Endothelial cell of umbilical vein (primary cell): ENCODE measurements at regions of chr9 and their contacts with region 1.

Region 1: DNA sequence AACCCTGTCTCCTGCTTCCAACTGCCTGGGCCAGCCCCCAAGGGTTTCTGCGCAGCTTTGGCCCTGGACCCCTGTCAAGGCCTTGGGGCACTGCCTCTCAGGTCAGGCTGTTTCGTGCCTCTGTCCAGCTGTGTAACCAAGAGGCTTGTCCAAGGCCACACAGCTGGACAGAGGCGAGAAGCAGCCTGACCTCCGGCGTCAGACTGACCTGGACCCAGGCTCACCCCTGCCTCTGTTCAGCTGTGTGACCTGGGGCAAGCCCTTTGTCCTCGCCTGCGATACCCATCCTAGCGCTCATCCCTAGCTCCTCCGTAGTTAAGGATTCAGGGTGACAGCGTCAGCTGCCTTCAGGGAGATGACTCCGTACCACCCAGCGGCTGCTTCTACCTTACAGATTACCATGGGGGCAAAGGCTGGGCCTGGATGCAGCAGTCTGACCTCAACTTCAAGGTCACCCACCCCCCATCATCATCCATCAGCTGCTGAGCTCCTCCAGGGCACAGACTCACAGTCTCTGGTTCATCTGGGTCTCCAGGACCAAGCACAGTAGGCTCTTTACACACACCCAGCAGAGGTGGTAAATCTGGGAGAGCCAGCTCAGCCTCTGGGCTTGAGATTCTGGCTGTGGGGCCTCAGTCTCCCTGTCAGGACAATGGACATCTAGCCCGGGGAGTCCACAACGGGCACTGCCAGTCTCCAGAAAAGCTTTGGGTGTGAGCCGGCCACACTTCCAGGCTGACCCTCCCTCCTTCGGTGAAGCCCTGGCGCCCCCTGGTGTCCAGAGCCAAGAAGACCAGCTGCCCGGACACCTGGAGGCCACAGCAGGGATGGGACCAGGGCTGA is 7.9 kb downstream of the AK1 start:
- DNase-seq: peak; percentile 78
- H3K4me3 ChIP-seq: no peak overlapping the region
- H3K27ac ChIP-seq: no peak overlapping the region
- H3K4me1 ChIP-seq: peaks cover 17% of the 10 kb centered on the region
- H3K27me3 ChIP-seq: no peaks in the 10 kb centered on the region
- CTCF ChIP-seq: peak; percentile 91 to 95
- POLR2A ChIP-seq: no peak

Region 2: GRCh38 chr9:127742435-127743088 is 127.0 kb before region 1 on chr9:
- CTCF ChIA-PET with region 1: interaction called, 8 read pairs
- POLR2A ChIA-PET with region 1: interaction called, 3 read pairs
- dilution Hi-C with region 1: no loop called
- intact Hi-C with region 1: loop called (anchors 1 kb)
- DNase-seq: no peak
- H3K4me3 ChIP-seq: no peak overlapping the region
- H3K27ac ChIP-seq: no peak overlapping the region
- H3K4me1 ChIP-seq: no peaks in the 10 kb centered on the region
- H3K27me3 ChIP-seq: no peaks in the 10 kb centered on the region
- CTCF ChIP-seq: no peak
- POLR2A ChIP-seq: no peak

Region 3: GRCh38 chr9:127796225-127796813 is 73.2 kb before region 1 on chr9:
- CTCF ChIA-PET with region 1: interaction called, 25 read pairs
- POLR2A ChIA-PET with region 1: interaction called, 4 read pairs
- dilution Hi-C with region 1: no loop called
- intact Hi-C with region 1: no loop called
- DNase-seq: no peak
- H3K4me3 ChIP-seq: no peak overlapping the region
- H3K27ac ChIP-seq: no peak overlapping the region
- H3K4me1 ChIP-seq: peaks cover 14% of the 10 kb centered on the region
- H3K27me3 ChIP-seq: no peaks in the 10 kb centered on the region
- CTCF ChIP-seq: no peak
- POLR2A ChIP-seq: peak; percentile 21

Region 4: DNA sequence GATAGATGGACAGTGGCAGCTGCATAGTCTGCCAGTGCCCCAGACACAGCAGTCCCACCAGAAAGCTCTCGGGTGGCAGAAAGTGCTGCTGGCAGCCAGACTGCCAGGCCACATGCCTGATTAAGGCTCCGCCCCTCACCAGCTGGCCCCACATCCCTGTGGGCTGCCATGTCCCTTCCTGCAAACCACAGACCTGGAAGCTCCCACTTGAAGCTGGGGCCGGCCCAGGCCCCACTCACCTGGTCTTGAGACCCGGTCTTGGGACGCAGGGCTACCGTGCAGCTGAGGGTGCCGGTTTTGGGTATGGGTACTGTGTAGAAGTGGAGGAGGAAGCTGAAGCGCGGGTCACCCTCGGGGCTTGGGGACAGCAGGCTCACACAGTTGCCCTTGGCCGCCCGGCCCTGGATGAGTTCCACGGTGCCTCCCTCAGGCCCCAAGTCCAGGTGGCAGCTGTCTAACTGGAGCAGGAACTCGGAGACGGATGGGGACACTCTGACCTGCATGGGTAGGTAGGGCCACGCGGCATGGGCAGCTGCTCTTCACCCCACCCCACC is 51.6 kb before region 1 on chr9:
- CTCF ChIA-PET with region 1: interaction called, 76 read pairs
- POLR2A ChIA-PET with region 1: no interaction called
- dilution Hi-C with region 1: no loop called
- intact Hi-C with region 1: loop called (anchors 2 kb)
- DNase-seq: no peak
- H3K4me3 ChIP-seq: no peak overlapping the region
- H3K27ac ChIP-seq: no peak overlapping the region
- H3K4me1 ChIP-seq: peaks cover 10% of the 10 kb centered on the region
- H3K27me3 ChIP-seq: no peaks in the 10 kb centered on the region
- CTCF ChIP-seq: no peak
- POLR2A ChIP-seq: no peak

Region 5: GRCh38 chr9:127838375-127839078 is 31.0 kb before region 1 on chr9:
- CTCF ChIA-PET with region 1: interaction called, 37 read pairs
- POLR2A ChIA-PET with region 1: interaction called, 5 read pairs
- dilution Hi-C with region 1: no loop called
- intact Hi-C with region 1: no loop called
- DNase-seq: peak; percentile 97
- H3K4me3 ChIP-seq: no peak overlapping the region
- H3K27ac ChIP-seq: peak overlapping the region; percentile 99
- H3K4me1 ChIP-seq: peaks cover 74% of the 10 kb centered on the region
- H3K27me3 ChIP-seq: no peaks in the 10 kb centered on the region
- CTCF ChIP-seq: no peak
- POLR2A ChIP-seq: peak; percentile 76

Region 6: DNA sequence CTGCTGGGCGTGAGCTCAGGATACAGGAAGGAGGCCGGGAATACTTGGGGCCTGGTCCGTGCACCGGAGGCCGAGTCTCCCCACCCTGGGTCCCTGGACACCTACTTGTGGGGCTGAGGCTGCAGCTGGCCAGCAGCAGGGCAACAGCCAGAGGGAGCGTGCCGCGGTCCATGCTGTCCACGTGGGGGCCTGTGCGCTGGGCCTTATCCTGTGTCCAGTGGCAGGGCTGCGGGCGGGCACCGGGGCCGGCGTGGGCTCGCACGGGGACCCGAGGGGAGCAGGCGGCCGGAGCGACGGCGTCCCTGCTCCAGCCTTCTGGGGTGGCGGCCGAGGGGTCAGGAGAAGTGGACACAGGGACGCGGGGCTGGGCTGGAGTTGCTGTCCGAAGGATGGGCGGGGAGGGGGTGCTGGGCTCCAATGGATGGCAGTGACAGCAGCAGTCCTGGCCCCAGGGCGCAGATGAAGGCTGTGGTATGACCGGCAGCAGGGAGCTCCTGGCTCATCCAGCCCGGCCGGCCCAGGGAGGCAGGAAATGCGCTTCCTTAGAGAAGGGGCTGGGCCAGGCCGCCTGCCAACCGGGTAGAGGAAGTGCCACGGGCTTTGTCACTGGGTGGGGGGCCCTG is 15.2 kb before region 1 on chr9 and contains the start of gene ENG:
- CTCF ChIA-PET with region 1: interaction called, 101 read pairs
- POLR2A ChIA-PET with region 1: interaction called, 10 read pairs
- dilution Hi-C with region 1: no loop called
- intact Hi-C with region 1: no loop called
- DNase-seq: peak; percentile 63
- H3K4me3 ChIP-seq: peak within 1 kb of the TSS; percentile 81 to 99 (median 97)
- H3K27ac ChIP-seq: peak within 1 kb of the TSS; percentile 82
- H3K4me1 ChIP-seq: peaks cover 38% of the 10 kb centered on the region
- H3K27me3 ChIP-seq: no peaks in the 10 kb centered on the region
- CTCF ChIP-seq: peak in 1 of 2 donors; percentile 26
- POLR2A ChIP-seq: peak; percentile 98
- total RNA-seq, gene ENG: 688 and 728 TPM in 2 replicates